ENCODE measurements at regions of chr11 and their contacts with region 1.

Region 1: DNA sequence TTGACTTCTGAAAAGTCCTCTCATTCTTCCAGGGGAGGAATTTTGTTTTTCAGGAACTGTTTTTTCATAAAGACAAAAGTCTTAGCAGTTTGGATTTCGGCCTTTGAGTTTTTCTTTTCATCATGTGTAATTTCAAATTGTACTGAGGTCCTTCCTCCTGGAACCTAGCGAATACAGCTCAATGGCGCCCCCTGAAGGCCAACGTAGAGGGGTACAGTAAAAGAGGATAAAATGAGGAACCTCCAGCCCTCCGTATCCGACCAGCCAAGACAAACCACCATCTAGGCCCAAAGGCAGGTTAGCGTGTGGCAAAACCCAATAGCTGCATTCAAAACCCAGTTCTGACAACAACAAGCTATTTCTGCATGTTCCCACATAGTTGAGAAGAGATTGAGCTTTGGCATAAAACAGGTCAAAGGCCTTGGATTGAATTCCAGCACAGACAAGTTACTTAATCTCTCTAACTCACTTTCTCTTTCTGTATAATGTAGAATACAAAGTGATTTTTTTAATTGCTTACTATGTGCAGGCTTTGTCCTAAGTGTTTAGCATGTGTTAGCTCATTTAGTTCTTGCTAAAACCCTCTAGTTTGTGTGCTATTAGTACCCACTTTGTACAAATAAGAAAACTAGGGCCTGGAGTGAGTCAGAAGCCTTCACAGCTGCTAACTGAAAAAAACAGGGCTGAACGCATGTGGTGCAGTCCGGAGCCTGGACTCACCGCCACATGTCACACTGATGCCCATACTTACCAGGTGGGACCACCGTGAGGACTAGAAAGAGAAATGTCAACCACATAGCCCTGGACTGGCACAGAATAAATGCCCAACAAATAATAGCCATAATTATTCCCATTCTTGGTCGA is 43.2 kb upstream of the ETS1 start:
- DNase-seq: peak; percentile 97
- ATAC-seq: peak; percentile 73
- H3K4me3 Mint-ChIP-seq: peak overlapping the region; percentile 57
- H3K27ac Mint-ChIP-seq: peak overlapping the region; percentile 88
- H3K4me1 Mint-ChIP-seq: peaks cover 66% of the 10 kb centered on the region
- H3K27me3 Mint-ChIP-seq: no peaks in the 10 kb centered on the region

Region 2: GRCh38 chr11:128026596-128026995 is 604.0 kb before region 1 on chr11:
- CTCF ChIA-PET with region 1: interaction called, 3 read pairs
- POLR2A ChIA-PET with region 1: no interaction called
- intact Hi-C with region 1: loop called (anchors 1 to 5 kb)
- DNase-seq: no peak
- ATAC-seq: no peak
- H3K4me3 Mint-ChIP-seq: no peak overlapping the region
- H3K27ac Mint-ChIP-seq: no peak overlapping the region
- H3K4me1 Mint-ChIP-seq: peaks cover 8% of the 10 kb centered on the region
- H3K27me3 Mint-ChIP-seq: no peaks in the 10 kb centered on the region

Region 3: GRCh38 chr11:128232588-128232987 is 398.0 kb before region 1 on chr11:
- CTCF ChIA-PET with region 1: interaction called, 3 read pairs
- POLR2A ChIA-PET with region 1: no interaction called
- intact Hi-C with region 1: loop called (anchors 2 to 5 kb)
- DNase-seq: peak; percentile 81
- ATAC-seq: peak; percentile 63
- H3K4me3 Mint-ChIP-seq: no peak overlapping the region
- H3K27ac Mint-ChIP-seq: peak overlapping the region; percentile 92
- H3K4me1 Mint-ChIP-seq: peaks cover 60% of the 10 kb centered on the region
- H3K27me3 Mint-ChIP-seq: no peaks in the 10 kb centered on the region

Region 4: GRCh38 chr11:128422576-128423370 is 207.8 kb before region 1 on chr11:
- CTCF ChIA-PET with region 1: interaction called, 4 read pairs
- POLR2A ChIA-PET with region 1: interaction called, 3 read pairs
- intact Hi-C with region 1: loop called in 1 of 2 experiments (anchors 2 kb)
- DNase-seq: peak; percentile 97
- ATAC-seq: peak; percentile 94
- H3K4me3 Mint-ChIP-seq: peak overlapping the region; percentile 36
- H3K27ac Mint-ChIP-seq: peak overlapping the region; percentile 82
- H3K4me1 Mint-ChIP-seq: peaks cover 53% of the 10 kb centered on the region
- H3K27me3 Mint-ChIP-seq: no peaks in the 10 kb centered on the region

Region 5: DNA sequence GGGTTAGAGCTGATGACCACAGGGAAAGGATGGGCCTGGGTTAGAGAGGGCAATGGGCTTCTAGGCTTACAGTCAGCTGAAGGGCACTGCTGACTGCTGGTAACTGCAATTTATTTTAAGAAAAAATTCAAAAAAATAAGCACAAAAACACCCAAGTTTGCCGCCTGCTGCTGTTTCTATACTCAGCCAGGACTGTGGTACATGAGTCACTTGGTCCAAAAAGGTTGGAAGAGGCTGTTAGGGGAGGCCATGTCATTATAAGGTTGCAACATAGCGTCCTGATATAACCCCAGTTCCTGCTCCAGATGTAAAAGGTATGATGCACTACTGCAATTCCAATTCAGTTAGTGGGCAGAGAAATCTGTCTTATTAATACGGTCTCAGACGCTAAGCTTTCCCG is 142.1 kb before region 1 on chr11:
- CTCF ChIA-PET with region 1: interaction called, 11 read pairs
- POLR2A ChIA-PET with region 1: interaction called, 3 read pairs
- intact Hi-C with region 1: no loop called
- DNase-seq: peak; percentile 65
- ATAC-seq: peak; percentile 65
- H3K4me3 Mint-ChIP-seq: peak overlapping the region; percentile 48
- H3K27ac Mint-ChIP-seq: peak overlapping the region; percentile 89
- H3K4me1 Mint-ChIP-seq: peaks cover 98% of the 10 kb centered on the region
- H3K27me3 Mint-ChIP-seq: no peaks in the 10 kb centered on the region

Region 6: GRCh38 chr11:128553662-128554362 is 76.8 kb before region 1 on chr11:
- CTCF ChIA-PET with region 1: interaction called, 7 read pairs
- POLR2A ChIA-PET with region 1: interaction called, 5 read pairs
- intact Hi-C with region 1: loop called (anchors 2 kb)
- DNase-seq: no peak
- ATAC-seq: no peak
- H3K4me3 Mint-ChIP-seq: no peak overlapping the region
- H3K27ac Mint-ChIP-seq: peak overlapping the region; percentile 94
- H3K4me1 Mint-ChIP-seq: peaks cover 56% of the 10 kb centered on the region
- H3K27me3 Mint-ChIP-seq: no peaks in the 10 kb centered on the region

Region 7: DNA sequence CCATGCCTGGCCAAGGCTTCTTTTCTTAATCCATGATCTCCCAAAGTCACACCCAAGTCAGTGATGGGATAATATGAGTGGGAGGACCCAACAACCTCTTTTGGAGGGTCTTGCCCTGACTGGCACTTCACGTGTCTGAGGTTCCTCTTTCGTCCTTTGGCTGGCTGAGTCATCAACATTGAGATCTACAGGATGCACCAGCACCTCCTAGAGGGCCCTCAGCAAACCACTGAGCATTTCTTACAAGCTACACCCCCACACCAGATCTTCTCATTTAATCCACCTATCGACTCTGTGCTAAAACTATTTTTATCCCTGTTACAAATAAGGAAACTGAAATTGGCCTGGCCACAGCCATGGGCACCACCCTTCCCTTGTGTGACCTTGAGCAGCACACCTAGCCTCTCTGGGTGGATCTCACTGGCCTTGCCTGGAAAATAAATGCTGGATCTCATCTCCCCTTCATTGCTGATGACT is 126.7 kb after region 1 on chr11:
- CTCF ChIA-PET with region 1: interaction called, 39 read pairs
- POLR2A ChIA-PET with region 1: no interaction called
- intact Hi-C with region 1: loop called (anchors 1 kb)
- DNase-seq: peak; percentile 83
- ATAC-seq: peak; percentile 78
- H3K4me3 Mint-ChIP-seq: peak overlapping the region; percentile 32
- H3K27ac Mint-ChIP-seq: peak overlapping the region; percentile 95
- H3K4me1 Mint-ChIP-seq: peaks cover 79% of the 10 kb centered on the region
- H3K27me3 Mint-ChIP-seq: no peaks in the 10 kb centered on the region

Measured in activated CD4-positive, alpha-beta T cell treated with anti-CD3 and anti-CD28 coated beads for 36 hours (primary cell).